Right ventricle myocardium inferior (tissue), 1 donor: ENCODE measurements at regions of chr17 and their contacts with region 1.

Region 1: GRCh38 chr17:71118039-71118438 is 948.7 kb downstream of the KCNJ2 start:
- DNase-seq: no peak
- ATAC-seq: no peak

Region 2: GRCh38 chr17:71032746-71033273 is 85.2 kb before region 1 on chr17:
- intact Hi-C with region 1: no loop called
- DNase-seq: no peak
- ATAC-seq: no peak

Region 3: DNA sequence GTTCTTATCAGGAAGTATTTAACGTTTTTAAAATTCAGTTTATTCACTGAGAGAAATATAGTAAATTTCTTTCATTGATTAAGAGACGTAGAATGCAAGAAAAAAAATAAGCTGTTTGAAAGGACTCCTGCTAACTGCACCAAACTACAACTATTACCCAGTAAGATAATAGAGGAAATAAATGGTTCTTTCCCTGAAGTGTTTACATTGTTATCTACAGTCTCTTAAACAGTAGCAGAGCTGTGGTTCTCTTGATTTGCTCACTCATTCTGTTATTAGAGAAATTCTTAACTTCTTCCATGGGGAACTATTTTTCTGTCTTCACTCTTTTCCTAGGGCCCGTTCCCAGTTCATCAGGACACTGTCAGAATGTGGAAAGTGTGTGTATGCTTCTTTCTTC is 24.3 kb after region 1 on chr17:
- intact Hi-C with region 1: no loop called
- DNase-seq: no peak
- ATAC-seq: no peak

Region 4: DNA sequence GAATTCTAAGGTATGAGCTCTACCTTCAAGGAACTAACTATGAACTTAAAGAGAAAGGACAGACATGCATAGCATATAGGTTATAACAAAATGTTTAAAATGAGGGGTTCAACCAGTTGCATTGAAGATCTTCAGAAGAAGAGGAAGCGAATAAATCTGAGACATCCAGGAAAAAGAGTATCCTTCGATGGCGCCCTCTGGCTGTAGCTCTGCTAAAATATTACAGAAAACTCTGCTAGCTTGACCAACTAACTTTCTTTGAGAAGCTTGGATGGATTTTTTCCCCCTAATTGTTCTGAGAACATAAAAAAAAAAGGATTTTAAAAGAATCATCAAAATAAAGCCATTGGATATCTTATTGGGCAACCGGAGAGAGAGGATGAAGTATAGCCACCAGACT is 342.9 kb after region 1 on chr17:
- intact Hi-C with region 1: loop called (anchors 2 kb)
- DNase-seq: no peak
- ATAC-seq: no peak